Activated naive CD4-positive, alpha-beta T cell treated with anti-CD3 and anti-CD28 coated beads for 36 hours (primary cell): ENCODE measurements at regions of chr17 and their contacts with region 1.

Region 1: GRCh38 chr17:3913531-3914311 is 2.5 kb downstream of the P2RX1 start:
- DNase-seq: peak; percentile 90
- H3K4me3 Mint-ChIP-seq: no peak overlapping the region
- H3K27ac Mint-ChIP-seq: no peak overlapping the region
- H3K4me1 Mint-ChIP-seq: peaks cover 50% of the 10 kb centered on the region
- H3K27me3 Mint-ChIP-seq: no peaks in the 10 kb centered on the region

Region 2: GRCh38 chr17:3865176-3865575 is 48.5 kb before region 1 on chr17:
- CTCF ChIA-PET with region 1: interaction called, 12 read pairs
- intact Hi-C with region 1: loop called (anchors 2 kb)
- DNase-seq: no peak
- H3K4me3 Mint-ChIP-seq: no peak overlapping the region
- H3K27ac Mint-ChIP-seq: no peak overlapping the region
- H3K4me1 Mint-ChIP-seq: no peaks in the 10 kb centered on the region
- H3K27me3 Mint-ChIP-seq: no peaks in the 10 kb centered on the region

Region 3: DNA sequence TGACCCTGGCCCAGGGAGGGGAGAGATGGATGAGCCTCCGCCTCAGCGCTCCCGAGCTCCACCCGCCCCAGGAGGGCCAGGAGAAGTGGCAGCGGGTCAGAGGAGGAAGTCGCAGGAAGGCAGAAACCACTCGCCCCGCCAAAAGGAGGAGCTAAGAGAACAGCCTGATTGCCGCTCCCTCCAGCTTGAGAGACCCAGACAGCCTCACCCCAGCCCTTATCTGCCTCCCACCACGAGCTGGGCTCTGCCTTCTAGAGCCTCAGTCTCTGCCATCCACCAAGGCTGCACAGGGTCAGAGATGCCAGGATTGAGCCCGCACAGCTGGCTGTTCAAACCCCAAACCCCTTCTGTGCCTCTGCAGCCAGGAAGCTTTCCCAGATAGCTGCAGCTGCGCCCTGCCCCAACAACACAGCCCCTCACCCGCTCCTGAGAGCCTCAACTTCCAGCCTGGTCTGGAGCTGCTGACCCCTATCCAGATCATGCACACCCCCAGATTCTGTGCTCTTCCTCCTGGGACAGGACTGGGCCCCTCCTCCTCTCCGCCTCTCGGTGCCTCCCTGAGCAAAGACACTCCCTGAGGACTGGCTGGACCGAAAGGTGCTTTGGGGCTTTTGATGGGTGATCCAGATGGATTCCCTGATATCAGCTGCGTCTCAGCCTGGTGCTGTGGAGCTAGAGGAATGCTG is 51.5 kb after region 1 on chr17:
- CTCF ChIA-PET with region 1: interaction called, 13 read pairs
- intact Hi-C with region 1: loop called (anchors 1 kb)
- DNase-seq: peak; percentile 83
- H3K4me3 Mint-ChIP-seq: peak overlapping the region; percentile 91
- H3K27ac Mint-ChIP-seq: peak overlapping the region; percentile 89
- H3K4me1 Mint-ChIP-seq: peaks cover 38% of the 10 kb centered on the region
- H3K27me3 Mint-ChIP-seq: no peaks in the 10 kb centered on the region

Region 4: DNA sequence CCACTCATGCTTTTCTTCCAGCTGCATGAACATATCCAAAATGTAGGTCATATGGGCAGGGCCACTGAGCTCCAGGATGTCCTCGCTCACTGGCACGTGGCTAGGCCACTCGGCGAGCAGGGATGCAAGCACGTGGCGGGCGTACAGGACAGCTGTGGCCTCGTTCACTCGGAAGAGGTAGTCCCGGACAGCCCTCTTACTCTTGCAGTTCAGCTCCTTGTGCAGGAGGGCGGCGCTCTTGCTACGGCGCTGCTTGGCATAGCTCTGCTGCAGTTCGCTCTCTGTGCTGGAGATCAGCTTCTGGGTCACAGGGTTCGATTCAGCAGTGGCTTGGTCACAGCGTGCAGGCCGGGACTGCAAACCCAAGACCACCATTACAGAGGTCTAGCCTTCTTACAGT is 103.7 kb after region 1 on chr17:
- CTCF ChIA-PET with region 1: interaction called, 13 read pairs
- intact Hi-C with region 1: no loop called
- DNase-seq: no peak
- H3K4me3 Mint-ChIP-seq: no peak overlapping the region
- H3K27ac Mint-ChIP-seq: no peak overlapping the region
- H3K4me1 Mint-ChIP-seq: no peaks in the 10 kb centered on the region
- H3K27me3 Mint-ChIP-seq: no peaks in the 10 kb centered on the region

Region 5: DNA sequence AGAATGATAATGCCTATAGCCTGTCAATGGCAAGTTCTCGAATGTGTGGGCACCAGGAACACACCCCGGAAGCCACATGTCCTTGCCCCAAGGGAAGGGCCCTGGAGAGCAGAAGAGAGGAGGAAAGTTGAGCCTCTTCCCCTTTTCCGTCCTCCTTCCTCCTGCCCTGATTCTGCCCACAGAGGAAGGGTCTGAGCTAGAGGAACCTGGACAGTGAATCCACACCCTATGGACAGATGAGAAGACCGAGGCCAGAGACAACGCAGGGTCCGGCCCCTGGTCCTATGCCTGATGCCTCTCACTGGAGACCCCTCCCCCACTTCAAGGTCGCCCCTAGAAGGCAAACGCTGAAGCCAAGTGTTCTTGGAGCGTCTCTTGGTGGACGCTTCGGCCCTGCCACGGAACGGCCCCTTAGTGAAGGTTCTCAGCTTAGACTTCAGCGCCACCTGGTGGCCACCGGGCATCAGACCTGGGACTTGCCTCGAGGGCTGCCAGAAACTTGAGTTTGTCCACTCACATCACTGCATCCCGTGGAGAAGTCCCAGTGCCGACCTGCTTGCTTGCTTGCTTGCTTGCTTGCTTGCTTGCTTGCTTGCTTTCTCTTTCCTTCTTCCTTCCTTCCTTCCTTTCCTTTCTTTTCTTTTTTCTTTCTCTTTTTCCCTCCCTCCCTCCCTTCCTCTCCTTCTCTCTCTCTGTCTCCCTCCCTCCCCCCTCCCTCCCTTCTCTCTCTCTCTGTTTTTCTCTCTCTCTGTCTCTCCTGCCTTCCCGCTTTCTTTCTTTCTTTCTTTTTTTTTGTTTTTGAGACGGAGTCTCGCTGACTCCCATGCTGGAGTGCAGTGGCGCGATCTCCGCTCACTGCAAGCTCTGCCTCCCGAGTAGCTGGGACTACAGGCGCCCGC is 499.5 kb after region 1 on chr17:
- CTCF ChIA-PET with region 1: no interaction called
- intact Hi-C with region 1: loop called (anchors 10 kb)
- DNase-seq: peak; percentile 96
- H3K4me3 Mint-ChIP-seq: peak overlapping the region; percentile 45
- H3K27ac Mint-ChIP-seq: no peak overlapping the region
- H3K4me1 Mint-ChIP-seq: peaks cover 5% of the 10 kb centered on the region
- H3K27me3 Mint-ChIP-seq: no peaks in the 10 kb centered on the region